Activated T-helper 2 cell treated with anti-CD3 and anti-CD28 coated beads, Interferon-gamma antibody, Interleukin-2, Interleukin-4, amounts not matched to agents 10 μg/mL and 5 μg/mL and 100 μg/mL, durations not matched to agents 14 hours and 24 hours and 36 hours (primary cell): ENCODE measurements at regions of chr3 and their contacts with region 1.

Region 1: GRCh38 chr3:53130179-53131061 is at the start of gene RFT1:
- DNase-seq: peak; percentile 96
- H3K4me3 Mint-ChIP-seq: peak within 1 kb of the TSS; percentile 87
- H3K27ac Mint-ChIP-seq: peak within 1 kb of the TSS; percentile 95
- H3K4me1 Mint-ChIP-seq: peaks cover 17% of the 10 kb centered on the region
- H3K27me3 Mint-ChIP-seq: no peaks in the 10 kb centered on the region
- total RNA-seq, gene RFT1: 36.4 and 38.8 TPM in 2 replicates

Region 2: GRCh38 chr3:53160660-53161449 is 30.4 kb after region 1 on chr3 and contains the start of gene PRKCD:
- intact Hi-C with region 1: loop called (anchors 1 kb)
- DNase-seq: peak; percentile 68
- H3K4me3 Mint-ChIP-seq: peak within 1 kb of the TSS; percentile 88
- H3K27ac Mint-ChIP-seq: peak within 1 kb of the TSS; percentile 81
- H3K4me1 Mint-ChIP-seq: peaks cover 24% of the 10 kb centered on the region
- H3K27me3 Mint-ChIP-seq: peaks cover 21% of the 10 kb centered on the region
- total RNA-seq, gene PRKCD: 30.6 and 31.7 TPM in 2 replicates

Region 3: DNA sequence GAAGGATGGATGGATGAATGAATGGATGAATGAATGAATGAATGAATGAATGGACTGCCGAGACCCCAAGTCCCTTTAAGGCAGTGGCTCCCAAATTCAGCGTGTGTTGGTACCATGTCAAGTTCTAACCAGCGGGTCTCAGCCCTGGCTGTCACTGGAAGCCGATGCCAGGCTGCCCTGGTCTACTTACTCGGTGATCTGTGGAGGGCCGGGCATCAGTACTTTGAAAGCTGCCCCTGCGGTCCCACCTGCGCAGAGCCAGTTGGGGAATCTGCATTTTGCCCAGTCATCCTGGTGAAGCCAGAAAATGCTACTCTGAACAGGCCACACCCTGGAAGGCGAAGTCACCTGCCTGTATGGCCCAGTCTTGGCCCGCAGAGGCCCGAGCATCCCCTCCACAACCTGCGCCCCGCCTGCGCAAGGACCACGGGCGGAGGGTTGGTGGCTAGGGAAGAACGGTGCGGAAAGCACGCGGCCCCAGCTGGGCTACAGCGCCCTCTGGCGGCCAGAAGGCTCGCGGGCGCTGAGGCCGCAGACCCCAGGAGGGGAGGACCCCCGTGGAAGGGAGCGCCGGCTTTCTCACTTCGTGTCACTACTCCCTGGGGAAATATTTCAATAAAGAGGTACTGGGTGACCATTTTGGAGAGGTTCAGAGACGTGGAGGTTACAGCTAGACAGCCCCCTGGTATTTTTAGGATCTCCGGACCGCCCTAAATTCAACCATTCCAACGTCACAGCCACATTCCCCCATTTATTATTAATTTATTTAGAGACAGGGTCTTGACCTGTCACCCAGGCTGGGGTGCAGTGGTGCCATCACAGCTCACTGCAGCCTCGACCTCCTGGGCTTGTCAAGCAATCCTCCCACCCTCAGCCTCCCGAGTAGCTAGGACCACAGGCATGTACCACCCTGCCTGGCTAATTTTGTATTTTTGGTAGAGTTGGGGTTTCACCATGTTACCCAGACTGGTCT is 65.5 kb after region 1 on chr3:
- intact Hi-C with region 1: loop called (anchors 1 kb)
- DNase-seq: peak; percentile 39
- H3K4me3 Mint-ChIP-seq: no peak overlapping the region
- H3K27ac Mint-ChIP-seq: no peak overlapping the region
- H3K4me1 Mint-ChIP-seq: peaks cover 6% of the 10 kb centered on the region
- H3K27me3 Mint-ChIP-seq: no peaks in the 10 kb centered on the region